ENCODE measurements at regions of chr6 and their contacts with region 1.

Region 1: DNA sequence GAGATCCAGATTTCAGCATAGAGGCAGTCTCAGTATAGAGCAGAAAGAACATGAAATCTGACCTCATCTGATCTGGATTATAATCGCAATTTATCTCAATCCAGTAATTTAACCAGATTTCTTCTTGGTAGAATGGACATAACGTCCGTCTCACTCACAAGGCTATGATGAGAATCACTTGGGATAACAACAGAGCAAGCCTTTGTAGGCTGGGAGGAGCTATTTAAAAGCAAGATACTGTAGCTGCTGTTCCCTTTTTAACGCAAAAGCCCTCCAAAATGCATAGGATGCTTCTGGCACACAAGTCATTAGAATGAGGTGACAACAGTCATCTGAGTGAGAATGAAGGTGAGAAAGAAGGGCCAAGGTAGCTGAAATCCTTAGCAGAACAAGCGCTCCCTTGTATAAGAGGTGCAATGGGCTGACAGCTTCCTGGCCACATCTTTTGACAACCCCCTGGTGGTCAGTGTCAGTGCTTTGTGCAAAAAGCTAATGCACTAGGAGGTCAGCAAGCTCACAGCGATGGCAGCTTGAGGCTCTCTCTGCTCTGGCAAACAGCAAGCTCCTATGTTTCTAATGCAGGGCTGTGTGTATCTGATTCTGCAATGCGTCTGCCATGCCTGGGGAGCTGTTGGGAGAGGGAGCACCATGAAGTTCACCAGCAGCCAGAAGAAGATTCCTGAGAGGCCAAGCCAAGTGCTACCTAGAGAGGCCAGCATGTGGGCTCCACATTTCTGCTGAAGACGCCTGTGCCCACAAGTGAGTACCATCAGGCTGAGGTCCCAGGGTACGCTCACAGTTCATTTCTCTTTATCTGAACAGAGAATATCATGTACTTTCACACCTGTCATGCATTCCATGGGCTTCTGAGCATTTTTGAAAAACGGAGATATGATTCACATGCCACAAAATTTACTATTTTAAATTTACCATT is 16.2 kb downstream of the METTL24 start:
- DNase-seq: peak; percentile 58
- ATAC-seq: peak; percentile 90
- H3K4me3 Mint-ChIP-seq: no peak overlapping the region
- H3K27ac Mint-ChIP-seq: no peak overlapping the region
- H3K4me1 Mint-ChIP-seq: peaks cover 9% of the 10 kb centered on the region; the same call in 1 of the 2 replicates
- H3K27me3 Mint-ChIP-seq: no peaks in the 10 kb centered on the region
- CTCF ChIP-seq: 0 out of 2 replicates have a peak, but pooled peaks have one; percentile 20

Region 2: DNA sequence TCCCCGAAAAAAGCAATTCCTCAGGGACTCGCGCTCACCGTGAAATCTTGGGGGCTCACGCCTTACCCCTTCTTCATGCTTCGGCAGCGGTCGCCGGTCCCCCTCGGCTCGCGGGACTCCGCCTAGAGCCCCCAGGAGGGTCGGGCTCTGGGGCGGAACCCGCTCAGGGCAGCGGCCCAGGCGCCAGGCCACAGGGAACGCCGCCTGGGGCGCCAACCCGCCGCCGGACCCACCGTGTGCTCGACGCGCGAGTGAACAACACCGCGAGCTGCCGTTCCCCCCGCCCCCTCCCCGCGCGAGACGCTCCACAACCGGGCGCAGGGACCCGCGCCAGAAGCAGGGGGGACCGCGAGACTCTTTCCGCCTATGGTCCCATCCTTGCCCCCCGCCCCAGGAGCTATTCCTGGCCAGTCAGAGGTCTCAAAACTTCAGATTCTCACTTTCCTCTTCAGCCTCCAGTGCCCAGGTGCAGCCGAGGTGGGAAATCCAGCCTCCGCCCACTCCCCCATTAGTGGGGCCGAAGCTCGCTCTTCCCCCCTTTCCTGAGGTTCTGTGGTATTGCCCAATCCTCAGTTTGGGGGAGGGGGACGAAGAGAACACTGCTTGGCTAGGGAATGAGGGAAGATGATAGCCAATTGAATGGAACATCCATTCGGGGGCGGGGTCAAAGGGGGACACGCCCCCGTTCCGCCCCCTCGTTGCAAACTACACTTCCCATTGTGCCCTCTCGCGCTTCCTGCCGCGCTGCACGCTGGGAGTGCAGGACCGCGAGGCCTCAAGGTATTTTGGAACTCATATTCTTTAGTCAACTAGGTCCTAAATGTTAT is 162.3 kb before region 1 on chr6 and contains the start of gene WASF1:
- CTCF ChIA-PET with region 1: interaction called, 13 read pairs
- POLR2A ChIA-PET with region 1: no interaction called
- DNase-seq: peak; percentile 96
- ATAC-seq: peak; percentile 86
- H3K4me3 Mint-ChIP-seq: peak within 1 kb of the TSS; percentile 81
- H3K27ac Mint-ChIP-seq: peak within 1 kb of the TSS; percentile 97; the same call in 1 of the 2 replicates
- H3K4me1 Mint-ChIP-seq: peaks cover 7% of the 10 kb centered on the region
- H3K27me3 Mint-ChIP-seq: no peaks in the 10 kb centered on the region
- CTCF ChIP-seq: no peak
- total RNA-seq, gene WASF1: 22.3 to 28.9 TPM (median 27.7 TPM) in 3 replicates

Region 3: GRCh38 chr6:110317189-110317588 is 24.7 kb before region 1 on chr6:
- CTCF ChIA-PET with region 1: interaction called, 15 read pairs
- POLR2A ChIA-PET with region 1: no interaction called
- DNase-seq: no peak
- ATAC-seq: no peak
- H3K4me3 Mint-ChIP-seq: no peak overlapping the region
- H3K27ac Mint-ChIP-seq: no peak overlapping the region
- H3K4me1 Mint-ChIP-seq: peaks cover 14% of the 10 kb centered on the region
- H3K27me3 Mint-ChIP-seq: peaks cover 2% of the 10 kb centered on the region; the same call in 1 of the 2 replicates
- CTCF ChIP-seq: no peak

Region 4: DNA sequence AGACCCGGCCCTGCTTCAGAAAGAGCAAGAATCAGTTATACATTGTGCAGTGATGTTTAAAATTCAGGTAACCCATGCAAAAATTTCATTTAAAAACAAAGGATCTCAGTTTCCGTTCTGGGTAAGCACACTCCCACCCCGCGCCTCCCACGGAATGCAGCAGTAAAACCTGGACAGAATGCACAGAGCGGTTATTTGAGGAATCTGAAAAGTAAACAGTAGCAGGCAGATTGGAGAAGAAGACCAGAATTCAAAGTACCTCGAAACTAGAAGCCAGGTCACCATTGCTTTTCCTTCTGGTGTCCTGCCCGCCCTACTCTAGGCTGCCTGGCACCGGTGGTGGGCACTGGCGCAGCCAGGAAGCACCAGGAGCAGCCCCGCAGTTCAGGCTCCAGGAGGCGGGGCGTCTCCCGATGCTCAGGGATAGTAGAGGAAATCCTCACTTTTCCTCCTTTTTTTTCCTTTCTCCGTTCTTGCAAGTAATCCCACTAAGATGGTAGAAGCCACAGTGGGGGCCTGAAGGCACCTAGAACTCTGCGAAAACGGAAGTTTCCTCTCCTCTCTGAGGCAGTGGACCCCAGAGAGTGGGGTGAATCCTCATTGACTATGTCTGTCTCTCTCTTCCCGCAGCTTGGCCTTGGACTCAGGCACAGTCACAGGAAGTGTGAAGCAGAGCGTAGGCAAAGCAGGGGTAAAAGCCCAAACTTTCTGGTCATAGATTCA is 12.1 kb before region 1 on chr6:
- CTCF ChIA-PET with region 1: interaction called, 19 read pairs
- POLR2A ChIA-PET with region 1: no interaction called
- DNase-seq: no peak
- ATAC-seq: peak; percentile 26; the same call in 1 of the 2 replicates
- H3K4me3 Mint-ChIP-seq: no peak overlapping the region
- H3K27ac Mint-ChIP-seq: no peak overlapping the region
- H3K4me1 Mint-ChIP-seq: peaks cover 40% of the 10 kb centered on the region
- H3K27me3 Mint-ChIP-seq: no peaks in the 10 kb centered on the region
- CTCF ChIP-seq: no peak

Region 5: GRCh38 chr6:110357664-110358552 is 16.0 kb after region 1 on chr6 and contains the start of gene METTL24:
- CTCF ChIA-PET with region 1: interaction called, 47 read pairs
- POLR2A ChIA-PET with region 1: no interaction called
- DNase-seq: peak; percentile 53
- ATAC-seq: peak; percentile 77
- H3K4me3 Mint-ChIP-seq: peak within 1 kb of the TSS; percentile 82
- H3K27ac Mint-ChIP-seq: no peak within 1 kb of the TSS
- H3K4me1 Mint-ChIP-seq: peaks cover 54% of the 10 kb centered on the region
- H3K27me3 Mint-ChIP-seq: peaks cover 37% of the 10 kb centered on the region
- CTCF ChIP-seq: no peak
- total RNA-seq, gene METTL24: 0.21 to 0.44 TPM (median 0.31 TPM) in 3 replicates